Breast epithelium (tissue), 4 donors: ENCODE measurements at regions of chr3 and their contacts with region 1.

Region 1: GRCh38 chr3:114383875-114384557 is 90.2 kb downstream of the TIGIT start:
- DNase-seq: peak; percentile 69 to 72
- H3K4me3 ChIP-seq: peak overlapping the region; percentile 34 to 56 (median 46)
- H3K27ac ChIP-seq: peak overlapping the region; percentile 76
- H3K4me1 ChIP-seq: peaks cover 0 to 20% of the 10 kb centered on the region in 2 donors
- H3K27me3 ChIP-seq: no peaks in the 10 kb centered on the region
- CTCF ChIP-seq: peak; percentile 56 to 87 (median 87)
- POLR2A ChIP-seq: no peak

Region 2: GRCh38 chr3:114445233-114445632 is 61.2 kb after region 1 on chr3:
- intact Hi-C with region 1: loop called (anchors 2 kb)
- DNase-seq: no peak
- H3K4me3 ChIP-seq: no peak overlapping the region
- H3K27ac ChIP-seq: peak overlapping the region; percentile 35 to 85
- H3K4me1 ChIP-seq: peaks cover 0 to 18% of the 10 kb centered on the region in 2 donors
- H3K27me3 ChIP-seq: no peaks in the 10 kb centered on the region
- CTCF ChIP-seq: no peak
- POLR2A ChIP-seq: no peak